Ascending aorta (tissue), 2 donors: ENCODE measurements at regions of chr3 and their contacts with region 1.

Region 1: DNA sequence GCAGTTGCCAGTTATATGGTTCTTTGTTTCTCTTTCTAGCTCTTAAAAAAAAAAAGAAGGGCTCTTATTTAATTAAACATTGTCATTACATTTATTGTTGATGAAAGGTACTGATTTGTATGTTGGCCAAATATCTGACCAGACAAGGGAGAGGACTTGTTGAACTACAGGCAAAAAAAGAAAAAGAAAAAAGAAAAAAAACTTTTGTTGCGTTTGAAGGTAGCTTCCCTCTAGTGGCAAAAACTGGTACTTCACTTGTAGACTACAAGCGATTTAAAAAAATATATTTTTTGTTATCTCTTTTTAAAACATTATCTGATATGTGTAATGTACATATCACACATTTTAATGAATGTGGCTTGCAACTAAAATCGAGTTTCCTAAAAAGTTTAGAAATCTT is 280.6 kb downstream of the ROBO2 start:
- DNase-seq: no peak
- H3K4me3 ChIP-seq: peak overlapping the region in 1 of 2 donors; percentile 26
- H3K27ac ChIP-seq: no peak overlapping the region
- H3K4me1 ChIP-seq: peaks cover 0 to 17% of the 10 kb centered on the region in 2 donors
- H3K27me3 ChIP-seq: no peaks in the 10 kb centered on the region
- CTCF ChIP-seq: peak in 2 of 3 experiments; percentile 15 to 55

Region 2: DNA sequence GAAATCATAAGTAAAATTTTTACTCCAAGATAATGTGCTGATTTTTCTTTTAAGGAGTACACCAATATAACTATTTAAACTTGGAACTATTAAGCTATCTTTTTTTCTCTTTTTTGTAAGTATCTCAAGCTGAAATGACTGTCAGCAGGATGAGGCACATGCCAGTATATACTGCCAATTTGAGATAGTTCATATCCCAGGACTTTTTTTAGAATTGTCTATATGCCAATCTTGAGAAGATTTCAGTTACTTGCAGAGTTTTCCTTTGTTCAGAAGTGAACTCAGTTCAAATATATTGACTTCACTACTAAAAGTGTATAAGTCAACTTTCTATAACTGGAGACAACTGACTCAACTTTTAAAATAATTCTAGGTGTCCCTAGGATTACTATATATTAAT is 1353.4 kb before region 1 on chr3:
- intact Hi-C with region 1: no loop called
- DNase-seq: no peak
- H3K4me3 ChIP-seq: no peak overlapping the region
- H3K27ac ChIP-seq: no peak overlapping the region
- H3K4me1 ChIP-seq: no peaks in the 10 kb centered on the region
- H3K27me3 ChIP-seq: no peaks in the 10 kb centered on the region
- CTCF ChIP-seq: no peak

Region 3: GRCh38 chr3:77342688-77343087 is 22.2 kb after region 1 on chr3:
- intact Hi-C with region 1: no loop called
- DNase-seq: no peak
- H3K4me3 ChIP-seq: no peak overlapping the region
- H3K27ac ChIP-seq: no peak overlapping the region
- H3K4me1 ChIP-seq: no peaks in the 10 kb centered on the region
- H3K27me3 ChIP-seq: no peaks in the 10 kb centered on the region
- CTCF ChIP-seq: no peak

Region 4: GRCh38 chr3:77467702-77468625 is 147.4 kb after region 1 on chr3:
- intact Hi-C with region 1: loop called (anchors 10 kb)
- DNase-seq: no peak
- H3K4me3 ChIP-seq: no peak overlapping the region
- H3K27ac ChIP-seq: peak overlapping the region in 1 of 2 donors; percentile 19
- H3K4me1 ChIP-seq: peaks cover 0 to 12% of the 10 kb centered on the region in 2 donors
- H3K27me3 ChIP-seq: no peaks in the 10 kb centered on the region
- CTCF ChIP-seq: no peak